Dorsolateral prefrontal cortex (tissue), 120 donors: ENCODE measurements at regions of chr4 and their contacts with region 1.

Region 1: DNA sequence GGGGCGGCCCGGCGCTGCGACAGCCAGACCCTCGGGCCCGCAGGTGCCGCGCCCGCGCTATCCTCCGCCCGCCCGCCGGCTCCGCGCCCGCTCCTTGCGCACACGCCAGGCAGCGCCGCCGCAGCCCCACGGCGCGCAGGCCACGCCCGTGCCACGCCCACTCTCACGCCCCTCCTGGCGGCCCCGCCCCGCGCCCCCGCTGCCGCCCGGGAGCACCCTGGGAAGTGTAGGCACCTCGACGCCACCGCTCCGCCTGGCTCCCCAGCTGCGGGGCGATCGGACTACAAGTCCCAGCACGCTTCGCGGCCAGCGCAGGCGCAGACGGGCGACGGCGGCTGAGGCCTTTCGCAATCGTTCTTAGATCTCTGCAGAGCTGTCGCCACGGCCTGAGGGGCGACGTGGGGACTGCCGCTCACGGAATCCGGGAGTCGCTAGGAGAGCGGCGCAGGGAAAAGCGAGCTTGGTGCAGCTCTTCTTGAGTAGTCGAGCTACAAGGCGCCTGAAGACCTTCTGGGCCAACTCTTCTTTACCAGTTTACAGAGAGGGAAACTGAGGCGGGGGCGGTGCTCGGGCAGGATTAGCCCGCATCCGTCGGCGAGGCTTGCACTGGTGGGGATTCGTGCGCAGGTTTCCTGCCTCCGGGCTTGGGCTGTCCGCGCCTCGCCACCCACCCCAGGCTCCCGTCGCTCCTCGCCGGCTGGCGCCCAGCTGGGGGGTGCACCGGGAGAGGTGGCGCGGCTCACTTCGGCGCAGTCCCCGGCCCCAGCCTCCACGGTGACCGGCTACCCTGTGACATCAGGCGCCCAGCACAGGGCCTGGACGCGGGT is at the start of gene ABLIM2:
- DNase-seq: peak; percentile 96 to 100 (median 98)
- H3K4me3 ChIP-seq: peak within 1 kb of the TSS; percentile 56 to 99 (median 92)
- H3K27ac ChIP-seq: peak within 1 kb of the TSS in 58 of 59 donors; percentile 1 to 94 (median 87)
- H3K27me3 ChIP-seq: no peaks in the 10 kb centered on the region
- CTCF ChIP-seq: peak in 20 of 56 donors; percentile 7 to 50 (median 28)
- total RNA-seq, gene ABLIM2: 43.2 to 185 (median 130) TPM

Region 2: GRCh38 chr4:8015512-8015911 is 143.4 kb before region 1 on chr4:
- intact Hi-C with region 1: loop called in 1 of 2 experiments (anchors 10 kb)
- DNase-seq: peak in 2 of 10 donors; percentile 40 to 49
- H3K4me3 ChIP-seq: peak overlapping the region in 23 of 59 donors; percentile 0 to 46 (median 25)
- H3K27ac ChIP-seq: peak overlapping the region in 6 of 59 donors; percentile 12 to 62 (median 32)
- H3K27me3 ChIP-seq: no peaks in the 10 kb centered on the region
- CTCF ChIP-seq: peak in 55 of 56 donors; percentile 11 to 71 (median 50)